ENCODE measurements at regions of chr10 and their contacts with region 1.

Region 1: DNA sequence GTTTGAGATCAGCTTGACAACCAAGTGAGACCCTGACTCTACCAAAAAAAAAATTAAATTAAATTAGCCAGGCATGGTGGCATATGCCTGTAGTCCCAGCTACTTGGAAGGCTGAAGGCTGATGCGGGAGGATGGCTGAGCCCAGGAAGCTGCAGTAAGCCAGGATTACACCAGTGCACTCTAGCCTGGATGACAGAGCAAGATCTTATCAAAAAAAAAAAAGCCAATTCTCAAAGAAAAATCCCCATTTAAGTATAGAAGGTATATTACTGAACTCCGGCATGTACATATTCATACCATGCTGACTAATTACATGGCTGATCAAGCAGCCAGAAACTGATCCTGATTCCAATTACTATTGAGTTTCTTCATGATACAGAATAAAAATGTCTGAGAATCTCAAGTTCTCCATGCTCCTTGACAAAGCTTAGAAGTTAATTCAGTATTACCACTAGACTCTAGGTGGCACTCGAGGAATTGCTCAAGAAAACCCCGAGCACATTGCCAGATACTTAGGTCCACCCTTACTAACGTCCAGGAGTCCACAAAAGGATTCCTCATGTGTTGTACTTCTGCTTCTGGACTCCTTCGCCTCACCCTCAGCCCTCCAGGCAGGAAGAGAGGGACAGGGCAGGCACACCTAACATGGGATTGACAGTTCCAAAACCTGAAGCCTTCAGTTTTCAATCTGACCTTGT is 148.9 kb downstream of the PARD3 start:
- DNase-seq: peak; percentile 38
- H3K4me3 ChIP-seq: no peak overlapping the region
- H3K27ac ChIP-seq: no peak overlapping the region
- H3K4me1 ChIP-seq: no peaks in the 10 kb centered on the region
- H3K27me3 ChIP-seq: no peaks in the 10 kb centered on the region
- CTCF ChIP-seq: peak; percentile 26

Region 2: GRCh38 chr10:34985823-34986222 is 319.7 kb after region 1 on chr10:
- intact Hi-C with region 1: loop called (anchors 10 kb)
- DNase-seq: no peak
- H3K4me3 ChIP-seq: no peak overlapping the region
- H3K27ac ChIP-seq: no peak overlapping the region
- H3K4me1 ChIP-seq: no peaks in the 10 kb centered on the region
- H3K27me3 ChIP-seq: no peaks in the 10 kb centered on the region
- CTCF ChIP-seq: no peak

Measured in colonic mucosa (tissue), 4 donors.